ENCODE measurements at regions of chr17 and their contacts with region 1.

Region 1: GRCh38 chr17:20992987-20993862 is 49.6 kb downstream of the USP22 start:
- DNase-seq: peak; percentile 88
- H3K27ac ChIP-seq: peak overlapping the region; percentile 56
- CTCF ChIP-seq: peak; percentile 91

Region 2: GRCh38 chr17:20922128-20922670 is 71.0 kb before region 1 on chr17:
- CTCF ChIA-PET with region 1: no interaction called
- POLR2A ChIA-PET with region 1: no interaction called
- DNase-seq: no peak
- H3K27ac ChIP-seq: no peak overlapping the region; the same call in 1 of the 2 replicates
- CTCF ChIP-seq: no peak

Region 3: GRCh38 chr17:21004016-21004930 is 11.0 kb after region 1 on chr17:
- CTCF ChIA-PET with region 1: interaction called, 11 read pairs
- POLR2A ChIA-PET with region 1: no interaction called
- DNase-seq: no peak
- H3K27ac ChIP-seq: peak overlapping the region; percentile 56; the same call in 1 of the 2 replicates
- CTCF ChIP-seq: no peak

Measured in RWPE1 (cell line).